MCF 10A (cell line): ENCODE measurements at regions of chr20 and their contacts with region 1.

Region 1: DNA sequence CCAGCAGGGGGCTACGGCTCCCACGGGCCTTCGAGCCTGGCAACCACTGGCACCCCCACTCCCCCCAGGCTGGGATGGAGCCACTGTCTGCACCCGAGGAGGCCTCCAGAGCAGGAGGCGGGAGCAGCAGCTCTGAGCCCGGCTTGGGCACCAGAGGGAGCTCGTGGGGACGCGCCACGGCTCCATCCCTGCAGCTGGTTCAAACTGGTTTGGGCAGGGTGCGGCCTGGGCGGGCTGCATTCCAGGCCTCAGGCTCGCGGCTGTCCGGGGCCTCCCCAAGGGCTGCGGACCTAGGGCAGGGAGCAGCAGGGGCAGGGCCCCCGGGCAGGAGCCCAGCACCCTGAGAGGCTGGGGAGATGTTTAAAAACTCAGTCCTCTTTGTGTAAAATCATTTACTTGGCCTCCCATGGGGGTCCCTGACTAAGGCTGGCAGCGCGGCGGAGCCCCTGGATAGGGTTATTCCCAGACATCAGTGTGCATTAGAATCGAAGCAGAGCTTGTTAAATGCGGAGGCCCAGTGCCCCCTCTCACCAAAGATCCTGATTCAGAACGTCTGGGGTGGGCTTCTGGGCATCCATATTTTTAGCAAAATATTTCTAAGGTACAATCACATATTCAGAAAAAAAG is 4.1 kb upstream of the BCAS4 start:
- DNase-seq: peak; percentile 85
- H3K4me3 Mint-ChIP-seq: no peak overlapping the region
- H3K27ac Mint-ChIP-seq: peak overlapping the region; percentile 69
- H3K4me1 Mint-ChIP-seq: peaks cover 6% of the 10 kb centered on the region
- H3K27me3 Mint-ChIP-seq: no peaks in the 10 kb centered on the region
- CTCF ChIP-seq: peak; percentile 70

Region 2: GRCh38 chr20:50663095-50663850 is 127.5 kb before region 1 on chr20:
- CTCF ChIA-PET with region 1: interaction called, 31 read pairs
- POLR2A ChIA-PET with region 1: interaction called, 9 read pairs
- intact Hi-C with region 1: loop called (anchors 1 kb)
- DNase-seq: peak; percentile 84
- H3K4me3 Mint-ChIP-seq: no peak overlapping the region
- H3K27ac Mint-ChIP-seq: peak overlapping the region; percentile 53
- H3K4me1 Mint-ChIP-seq: peaks cover 21% of the 10 kb centered on the region
- H3K27me3 Mint-ChIP-seq: no peaks in the 10 kb centered on the region
- CTCF ChIP-seq: peak; percentile 60

Region 3: GRCh38 chr20:50762435-50763201 is 28.1 kb before region 1 on chr20:
- CTCF ChIA-PET with region 1: interaction called, 100 read pairs
- POLR2A ChIA-PET with region 1: interaction called, 33 read pairs
- intact Hi-C with region 1: no loop called
- DNase-seq: peak; percentile 94
- H3K4me3 Mint-ChIP-seq: peak overlapping the region; percentile 61
- H3K27ac Mint-ChIP-seq: peak overlapping the region; percentile 89
- H3K4me1 Mint-ChIP-seq: peaks cover 27% of the 10 kb centered on the region
- H3K27me3 Mint-ChIP-seq: no peaks in the 10 kb centered on the region
- CTCF ChIP-seq: no peak

Region 4: DNA sequence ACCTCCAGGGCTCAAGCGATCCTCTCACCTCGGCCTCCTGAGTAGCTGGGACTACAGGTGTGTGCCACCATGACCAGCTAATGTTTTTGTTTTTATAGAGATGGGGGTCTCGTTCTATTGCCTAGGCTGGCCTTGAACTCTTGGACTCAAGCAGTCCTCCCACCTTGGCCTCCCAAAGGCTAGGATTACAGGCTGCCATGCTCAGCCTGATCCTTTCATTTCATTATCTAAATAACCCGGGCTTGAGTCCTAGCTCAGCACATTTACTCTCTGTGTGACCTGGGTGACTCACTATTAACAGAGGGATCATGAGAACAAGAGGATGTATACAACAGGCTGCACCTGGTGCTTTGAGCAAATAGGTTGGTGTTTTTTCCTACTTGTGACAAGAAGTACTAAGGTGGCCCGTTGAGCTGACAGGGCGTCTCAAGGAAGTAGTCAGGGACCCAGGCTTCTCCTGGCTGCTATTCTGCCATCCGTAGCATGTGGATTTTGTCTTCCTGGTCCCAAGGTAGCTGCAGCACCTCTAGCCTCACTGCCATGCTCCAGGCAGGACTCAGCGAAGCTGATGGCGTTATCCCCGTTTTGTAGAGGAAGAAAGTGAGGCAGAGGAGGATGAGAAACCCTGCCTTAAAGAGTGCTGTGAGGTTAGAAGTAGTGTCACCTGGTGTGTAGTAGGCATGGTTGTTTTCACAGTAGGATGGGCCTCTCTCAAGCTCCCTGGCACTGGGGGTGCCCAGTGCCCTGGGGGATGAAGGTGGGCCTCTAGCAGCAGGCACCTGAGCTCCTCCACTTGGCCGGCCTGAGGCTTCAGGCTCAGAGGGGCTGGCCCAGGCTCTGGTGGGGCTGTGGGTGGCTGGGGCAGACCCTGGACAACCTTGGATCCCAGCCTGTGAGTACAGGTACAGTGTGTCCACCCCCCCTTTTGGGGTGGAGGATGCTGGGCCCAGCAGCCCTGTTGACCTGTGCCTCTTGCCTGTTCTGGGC is 78.0 kb after region 1 on chr20:
- CTCF ChIA-PET with region 1: interaction called, 11 read pairs
- POLR2A ChIA-PET with region 1: no interaction called
- intact Hi-C with region 1: no loop called
- DNase-seq: no peak
- H3K4me3 Mint-ChIP-seq: no peak overlapping the region
- H3K27ac Mint-ChIP-seq: no peak overlapping the region
- H3K4me1 Mint-ChIP-seq: peaks cover 19% of the 10 kb centered on the region
- H3K27me3 Mint-ChIP-seq: no peaks in the 10 kb centered on the region
- CTCF ChIP-seq: no peak

Region 5: DNA sequence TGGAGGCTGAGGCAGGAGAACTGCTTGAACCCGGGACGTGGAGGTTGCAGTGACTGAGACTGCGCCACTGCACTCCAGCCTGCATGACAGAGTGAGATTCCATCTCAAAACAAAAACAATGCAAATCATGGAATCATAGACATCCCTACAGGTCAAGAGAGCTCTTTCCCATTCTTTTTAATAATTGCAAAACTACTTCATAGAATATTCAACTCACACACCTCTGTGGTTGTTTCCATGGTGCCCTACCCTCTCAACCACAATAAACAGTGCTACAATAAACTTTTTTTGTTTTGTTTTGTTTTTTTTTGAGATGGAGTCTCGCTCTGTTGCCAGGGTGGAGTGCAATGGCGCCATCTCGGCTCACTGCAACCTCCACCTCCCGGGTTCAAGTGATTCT is 152.3 kb after region 1 on chr20:
- CTCF ChIA-PET with region 1: interaction called, 10 read pairs
- POLR2A ChIA-PET with region 1: interaction called, 3 read pairs
- intact Hi-C with region 1: no loop called
- DNase-seq: no peak
- H3K4me3 Mint-ChIP-seq: no peak overlapping the region
- H3K27ac Mint-ChIP-seq: no peak overlapping the region
- H3K4me1 Mint-ChIP-seq: no peaks in the 10 kb centered on the region
- H3K27me3 Mint-ChIP-seq: no peaks in the 10 kb centered on the region
- CTCF ChIP-seq: no peak

Region 6: DNA sequence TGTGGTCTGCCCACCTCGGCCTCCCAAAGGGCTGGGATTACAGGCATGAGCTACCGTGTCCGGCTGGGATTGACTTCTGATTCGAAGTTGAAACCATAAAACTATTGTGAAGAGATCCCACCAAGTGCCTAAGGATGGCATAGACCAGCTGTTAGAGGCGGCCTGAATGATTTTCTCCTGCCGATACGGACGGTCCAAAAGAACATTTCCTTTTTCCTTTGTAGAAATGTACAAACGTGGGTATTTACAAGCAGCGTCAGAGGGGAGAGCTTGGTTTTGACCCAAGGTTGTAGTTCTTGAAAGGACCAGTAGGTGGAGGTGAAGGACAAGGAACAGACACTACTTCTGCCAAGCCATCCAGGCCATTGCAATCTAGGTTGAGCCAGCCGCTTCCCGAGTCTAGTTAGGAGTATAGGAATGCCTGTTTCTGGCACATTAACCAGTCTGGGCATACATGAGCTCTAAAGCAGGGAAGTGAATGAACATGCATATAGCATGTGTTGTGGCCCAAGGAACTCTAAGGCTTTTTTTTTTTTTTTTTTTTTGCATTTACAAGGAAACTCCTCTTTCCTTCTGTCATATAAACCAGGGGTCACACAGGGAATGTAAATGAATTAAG is 196.9 kb after region 1 on chr20:
- CTCF ChIA-PET with region 1: interaction called, 13 read pairs
- POLR2A ChIA-PET with region 1: interaction called, 6 read pairs
- intact Hi-C with region 1: no loop called
- DNase-seq: peak; percentile 90
- H3K4me3 Mint-ChIP-seq: no peak overlapping the region
- H3K27ac Mint-ChIP-seq: no peak overlapping the region
- H3K4me1 Mint-ChIP-seq: peaks cover 12% of the 10 kb centered on the region
- H3K27me3 Mint-ChIP-seq: no peaks in the 10 kb centered on the region
- CTCF ChIP-seq: peak; percentile 94